Activated CD8-positive, alpha-beta T cell treated with anti-CD3 and anti-CD28 coated beads for 36 hours (primary cell): ENCODE measurements at regions of chr1 and their contacts with region 1.

Region 1: DNA sequence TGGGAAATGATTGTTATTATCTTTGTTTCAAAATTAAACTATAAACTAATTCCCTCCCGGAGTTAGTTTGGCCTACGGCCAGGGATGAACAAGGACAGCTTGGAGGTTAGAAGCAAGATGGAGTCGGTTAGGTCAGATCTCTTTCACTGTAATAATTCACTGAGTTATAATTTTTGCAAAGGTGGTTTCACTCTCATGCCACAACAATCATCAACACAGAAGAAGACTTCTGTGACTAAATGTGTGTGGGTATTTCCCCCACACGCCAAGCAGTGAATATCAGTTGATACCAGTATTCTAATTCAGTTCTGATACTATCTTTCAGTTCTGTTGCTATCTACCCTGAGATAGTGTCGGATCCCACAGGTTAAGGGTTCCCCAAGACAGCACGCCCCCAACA is 215.1 kb downstream of the S1PR1 start:
- DNase-seq: peak; percentile 59
- ATAC-seq: peak; percentile 93
- H3K4me3 Mint-ChIP-seq: no peak overlapping the region
- H3K27ac Mint-ChIP-seq: peak overlapping the region; percentile 66
- H3K4me1 Mint-ChIP-seq: peaks cover 35% of the 10 kb centered on the region
- H3K27me3 Mint-ChIP-seq: peaks cover 13% of the 10 kb centered on the region
- CTCF ChIP-seq: no peak

Region 2: GRCh38 chr1:101371259-101371658 is 80.6 kb before region 1 on chr1:
- CTCF ChIA-PET with region 1: no interaction called
- POLR2A ChIA-PET with region 1: no interaction called
- intact Hi-C with region 1: loop called (anchors 1 kb)
- DNase-seq: peak; percentile 42
- ATAC-seq: peak; percentile 96
- H3K4me3 Mint-ChIP-seq: no peak overlapping the region
- H3K27ac Mint-ChIP-seq: no peak overlapping the region
- H3K4me1 Mint-ChIP-seq: peaks cover 10% of the 10 kb centered on the region
- H3K27me3 Mint-ChIP-seq: no peaks in the 10 kb centered on the region
- CTCF ChIP-seq: no peak

Region 3: DNA sequence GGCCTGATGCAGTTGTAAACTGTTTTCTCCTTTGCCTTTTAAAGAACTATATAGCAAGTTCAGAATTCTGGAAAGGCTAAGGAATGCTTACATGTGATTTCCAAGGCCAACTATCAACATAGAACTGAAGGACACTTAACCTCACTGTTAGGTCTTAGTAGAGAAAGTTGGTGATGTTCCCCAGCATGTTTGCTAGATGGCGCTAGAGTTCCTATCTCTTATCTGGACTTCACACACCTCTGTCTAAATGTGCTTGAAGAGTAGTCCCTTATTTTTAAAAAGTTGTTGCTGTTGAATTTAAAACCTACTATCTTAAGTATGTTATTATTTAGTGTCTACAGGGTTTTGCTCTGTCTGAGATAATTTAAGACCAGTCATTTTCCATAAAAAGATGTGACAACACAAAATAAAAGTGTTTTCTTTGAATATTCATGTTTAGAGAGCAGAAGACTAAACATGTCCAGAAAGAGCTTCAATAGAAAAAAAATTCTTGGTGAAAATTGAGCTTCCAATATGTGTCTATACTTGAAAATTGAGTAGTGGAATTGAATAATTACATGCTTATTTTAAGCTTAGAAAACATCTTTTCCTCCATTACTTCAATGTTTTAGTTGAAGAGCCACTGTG is 22.3 kb after region 1 on chr1:
- CTCF ChIA-PET with region 1: interaction called, 22 read pairs
- POLR2A ChIA-PET with region 1: no interaction called
- intact Hi-C with region 1: no loop called
- DNase-seq: no peak
- ATAC-seq: no peak
- H3K4me3 Mint-ChIP-seq: no peak overlapping the region
- H3K27ac Mint-ChIP-seq: no peak overlapping the region
- H3K4me1 Mint-ChIP-seq: peaks cover 7% of the 10 kb centered on the region
- H3K27me3 Mint-ChIP-seq: no peaks in the 10 kb centered on the region
- CTCF ChIP-seq: peak; percentile 63